ENCODE measurements at regions of chr4 and their contacts with region 1.

Region 1: GRCh38 chr4:73653695-73654106 is 33.5 kb upstream of the RASSF6 start:
- DNase-seq: no peak
- H3K4me3 ChIP-seq: no peak overlapping the region
- H3K27me3 ChIP-seq: peaks cover 1% of the 10 kb centered on the region; the same call in 1 of the 2 replicates
- CTCF ChIP-seq: peak; percentile 59

Region 2: GRCh38 chr4:73593631-73594241 is 60.0 kb before region 1 on chr4:
- CTCF ChIA-PET with region 1: interaction called, 37 read pairs
- POLR2A ChIA-PET with region 1: no interaction called
- DNase-seq: no peak
- H3K4me3 ChIP-seq: no peak overlapping the region
- H3K27me3 ChIP-seq: no peaks in the 10 kb centered on the region
- CTCF ChIP-seq: peak; percentile 62

Region 3: GRCh38 chr4:73631565-73632226 is 22.0 kb before region 1 on chr4:
- CTCF ChIA-PET with region 1: no interaction called
- POLR2A ChIA-PET with region 1: no interaction called
- DNase-seq: no peak
- H3K4me3 ChIP-seq: no peak overlapping the region
- H3K27me3 ChIP-seq: peaks cover 3% of the 10 kb centered on the region; the same call in 1 of the 2 replicates
- CTCF ChIP-seq: no peak

Region 4: GRCh38 chr4:73676861-73677323 is 23.2 kb after region 1 on chr4:
- CTCF ChIA-PET with region 1: no interaction called
- POLR2A ChIA-PET with region 1: no interaction called
- DNase-seq: no peak
- H3K4me3 ChIP-seq: no peak overlapping the region
- H3K27me3 ChIP-seq: no peaks in the 10 kb centered on the region
- CTCF ChIP-seq: no peak

Region 5: GRCh38 chr4:73816814-73817213 is 163.1 kb after region 1 on chr4:
- CTCF ChIA-PET with region 1: no interaction called
- POLR2A ChIA-PET with region 1: no interaction called
- DNase-seq: peak; percentile 27
- H3K4me3 ChIP-seq: no peak overlapping the region
- H3K27me3 ChIP-seq: no peaks in the 10 kb centered on the region
- CTCF ChIP-seq: no peak